ENCODE measurements at regions of chr12 and their contacts with region 1.

Region 1: GRCh38 chr12:110245369-110245772 is 35.7 kb upstream of the ATP2A2 start:
- H3K4me3 Mint-ChIP-seq: no peak overlapping the region
- H3K27ac Mint-ChIP-seq: no peak overlapping the region
- H3K4me1 Mint-ChIP-seq: peaks cover 20% of the 10 kb centered on the region
- H3K27me3 Mint-ChIP-seq: peaks cover 2% of the 10 kb centered on the region

Region 2: DNA sequence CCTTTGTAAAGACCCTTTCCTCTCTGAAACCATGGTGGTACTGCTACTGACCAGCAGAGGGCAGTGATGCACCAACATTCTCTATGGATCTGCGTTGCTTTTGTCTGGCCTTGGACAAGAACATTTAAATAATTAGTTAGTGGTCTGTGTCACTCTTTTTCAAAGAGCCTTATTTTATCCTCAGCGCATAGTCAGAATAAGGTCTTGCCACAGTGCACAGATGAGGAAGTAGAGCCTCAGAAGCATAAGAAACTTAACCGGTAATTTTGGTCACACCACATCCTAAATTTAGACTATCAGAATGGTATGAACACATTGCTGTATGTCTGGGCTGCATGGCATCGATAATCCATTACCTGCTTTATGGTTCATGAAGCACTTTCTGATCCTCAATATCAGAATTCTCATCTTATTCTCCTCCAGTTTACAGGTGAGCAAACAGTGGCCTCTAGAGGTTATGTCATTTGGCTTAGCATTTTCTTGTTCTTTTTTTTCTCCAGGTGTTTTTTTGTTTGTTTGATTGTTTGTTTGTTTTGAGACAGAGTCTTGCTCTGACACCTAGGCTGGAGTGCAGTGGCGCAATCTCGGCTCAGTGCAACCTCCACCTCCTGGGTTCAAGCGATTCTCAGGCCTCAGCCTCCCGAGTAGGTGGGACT is 144.9 kb before region 1 on chr12:
- intact Hi-C with region 1: loop called (anchors 1 kb)
- H3K4me3 Mint-ChIP-seq: no peak overlapping the region
- H3K27ac Mint-ChIP-seq: peak overlapping the region; percentile 48
- H3K4me1 Mint-ChIP-seq: peaks cover 32% of the 10 kb centered on the region
- H3K27me3 Mint-ChIP-seq: no peaks in the 10 kb centered on the region